ENCODE measurements at regions of chr6 and their contacts with region 1.

Region 1: DNA sequence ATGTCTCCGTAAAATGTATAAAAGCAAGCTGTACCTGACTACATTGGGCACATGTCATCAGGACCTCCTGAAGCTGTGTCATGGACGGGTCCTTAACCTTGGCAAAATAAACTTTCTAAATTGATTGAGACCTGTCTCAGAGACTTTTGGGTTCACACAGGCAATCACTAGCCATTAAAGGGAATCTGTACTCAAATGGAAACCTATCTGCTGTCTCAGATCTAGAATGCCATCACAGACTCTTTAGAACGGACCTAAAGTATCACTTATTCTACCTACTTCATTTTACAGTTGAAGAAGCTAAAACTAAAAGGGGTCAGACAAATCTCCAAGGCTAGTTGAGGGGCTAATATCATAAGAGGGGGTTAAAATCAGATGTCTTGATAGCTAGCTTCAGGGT is 11.1 kb downstream of the SAMD3 start:
- DNase-seq: no peak
- ATAC-seq: peak; percentile 61
- H3K4me3 ChIP-seq: no peak overlapping the region
- H3K27ac ChIP-seq: no peak overlapping the region
- H3K4me1 ChIP-seq: no peaks in the 10 kb centered on the region
- H3K27me3 ChIP-seq: no peaks in the 10 kb centered on the region
- CTCF ChIP-seq: no peak
- EP300 ChIP-seq: no peak
- POLR2A ChIP-seq: no peak
- RAD21 ChIP-seq: no peak

Region 2: GRCh38 chr6:130148181-130148580 is 63.5 kb before region 1 on chr6:
- CTCF ChIA-PET with region 1: no interaction called
- POLR2A ChIA-PET with region 1: no interaction called
- RAD21 ChIA-PET with region 1: no interaction called
- SMC1A ChIA-PET with region 1: no interaction called
- in situ Hi-C with region 1: no loop called
- intact Hi-C with region 1: no loop called
- DNase-seq: no peak
- ATAC-seq: peak; percentile 91
- H3K4me3 ChIP-seq: no peak overlapping the region
- H3K27ac ChIP-seq: no peak overlapping the region
- H3K4me1 ChIP-seq: no peaks in the 10 kb centered on the region
- H3K27me3 ChIP-seq: no peaks in the 10 kb centered on the region
- CTCF ChIP-seq: peak; percentile 25 to 52 (median 46)
- EP300 ChIP-seq: no peak
- POLR2A ChIP-seq: no peak
- RAD21 ChIP-seq: 0 out of 2 replicates have a peak, but pooled peaks have one; percentile 17

Region 3: GRCh38 chr6:130223508-130223907 is 11.8 kb after region 1 on chr6:
- CTCF ChIA-PET with region 1: interaction called, 4 read pairs
- POLR2A ChIA-PET with region 1: no interaction called
- RAD21 ChIA-PET with region 1: no interaction called
- SMC1A ChIA-PET with region 1: interaction called, 13 read pairs
- in situ Hi-C with region 1: no loop called
- intact Hi-C with region 1: no loop called
- DNase-seq: peak; percentile 65
- ATAC-seq: peak; percentile 99
- H3K4me3 ChIP-seq: no peak overlapping the region
- H3K27ac ChIP-seq: no peak overlapping the region
- H3K4me1 ChIP-seq: peaks cover 8% of the 10 kb centered on the region
- H3K27me3 ChIP-seq: no peaks in the 10 kb centered on the region
- CTCF ChIP-seq: peak; percentile 22 to 44 (median 33); a peak in 4 of 6 replicates
- EP300 ChIP-seq: no peak
- POLR2A ChIP-seq: no peak
- RAD21 ChIP-seq: no peak

Measured in GM12878 (cell line).